HEK293 (cell line): ENCODE measurements at regions of chr10 and their contacts with region 1.

Region 1: DNA sequence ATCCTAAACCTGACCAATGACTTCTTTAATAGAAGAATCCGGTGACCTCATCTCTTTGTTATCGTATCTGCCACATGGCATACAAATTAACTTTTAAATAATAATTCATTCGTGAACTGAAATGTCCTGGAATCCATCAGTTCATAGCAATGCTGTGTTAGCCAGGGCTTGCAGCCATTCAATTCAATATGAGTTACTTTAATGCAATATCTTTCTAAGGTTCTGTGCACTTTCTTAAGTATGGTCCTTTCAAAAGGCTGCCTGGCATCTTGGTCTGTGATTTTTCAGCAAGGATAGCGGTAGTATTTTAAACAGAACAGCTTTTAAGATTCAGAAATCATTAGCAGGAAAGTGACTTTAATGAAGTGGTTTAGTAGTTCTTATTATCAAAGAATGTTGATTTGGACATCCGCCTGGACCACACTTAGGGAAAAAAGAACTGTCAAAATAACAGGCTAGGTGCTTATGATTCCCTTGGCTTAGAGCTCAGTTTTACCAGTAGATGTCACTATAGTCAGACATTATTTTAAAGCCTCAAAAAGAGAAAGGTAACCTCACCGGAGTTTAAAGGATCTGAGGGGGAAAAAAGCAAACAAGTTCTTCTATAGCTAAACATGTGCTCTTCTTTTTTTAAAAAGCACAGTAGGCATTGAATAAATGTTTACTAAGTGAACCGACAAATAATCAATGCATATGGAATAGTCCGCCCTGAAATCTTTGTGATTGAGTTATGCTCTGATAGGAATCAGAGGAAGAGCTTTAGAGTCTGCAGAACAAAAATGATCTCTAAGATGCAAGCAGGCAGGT is 22.7 kb downstream of the SLC35G1 start:
- H3K4me3 ChIP-seq: no peak overlapping the region
- H3K27ac ChIP-seq: no peak overlapping the region
- H3K4me1 ChIP-seq: no peaks in the 10 kb centered on the region
- CTCF ChIP-seq: no peak

Region 2: GRCh38 chr10:93893646-93894515 is 22.6 kb before region 1 on chr10 and contains the start of gene SLC35G1:
- CTCF ChIA-PET with region 1: interaction called, 11 read pairs
- POLR2A ChIA-PET with region 1: no interaction called
- H3K4me3 ChIP-seq: peak within 1 kb of the TSS; percentile 84
- H3K27ac ChIP-seq: peak within 1 kb of the TSS; percentile 81; the same call in 1 of the 2 replicates
- H3K4me1 ChIP-seq: peaks cover 3% of the 10 kb centered on the region; the same call in 1 of the 2 replicates
- CTCF ChIP-seq: no peak

Region 3: GRCh38 chr10:94279835-94280709 is 363.6 kb after region 1 on chr10:
- CTCF ChIA-PET with region 1: interaction called, 16 read pairs
- POLR2A ChIA-PET with region 1: no interaction called
- H3K4me3 ChIP-seq: no peak overlapping the region
- H3K27ac ChIP-seq: no peak overlapping the region
- H3K4me1 ChIP-seq: no peaks in the 10 kb centered on the region
- CTCF ChIP-seq: peak; percentile 74

Region 4: GRCh38 chr10:94303929-94304328 is 387.5 kb after region 1 on chr10:
- CTCF ChIA-PET with region 1: no interaction called
- POLR2A ChIA-PET with region 1: no interaction called
- H3K4me3 ChIP-seq: no peak overlapping the region
- H3K27ac ChIP-seq: no peak overlapping the region
- H3K4me1 ChIP-seq: no peaks in the 10 kb centered on the region
- CTCF ChIP-seq: no peak

Region 5: DNA sequence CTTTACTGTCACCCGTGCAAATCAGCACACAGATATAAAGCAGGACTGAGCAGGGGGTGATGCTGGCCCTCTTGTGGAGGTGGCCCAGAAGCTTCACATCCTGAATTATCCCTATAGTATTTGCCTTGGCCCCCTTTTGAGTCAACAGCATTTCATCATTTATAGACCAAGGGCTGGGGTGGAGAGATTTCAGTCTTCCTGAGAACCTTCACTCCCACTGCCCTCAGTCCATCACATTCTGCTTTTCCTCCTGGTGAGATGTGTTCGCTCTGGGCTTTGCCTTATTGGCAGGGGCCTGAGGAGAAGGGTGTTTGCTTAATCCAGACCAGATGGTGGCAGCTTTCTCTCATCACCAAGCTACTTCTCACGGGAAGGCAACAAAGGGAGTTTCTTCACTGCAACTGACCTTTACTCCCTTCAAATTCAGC is 398.6 kb after region 1 on chr10:
- CTCF ChIA-PET with region 1: interaction called, 71 read pairs
- POLR2A ChIA-PET with region 1: interaction called, 4 read pairs
- H3K4me3 ChIP-seq: no peak overlapping the region
- H3K27ac ChIP-seq: no peak overlapping the region
- H3K4me1 ChIP-seq: no peaks in the 10 kb centered on the region
- CTCF ChIP-seq: 0 out of 2 replicates have a peak, but pooled peaks have one; percentile 31